ENCODE measurements at regions of chr18 and their contacts with region 1.

Region 1: DNA sequence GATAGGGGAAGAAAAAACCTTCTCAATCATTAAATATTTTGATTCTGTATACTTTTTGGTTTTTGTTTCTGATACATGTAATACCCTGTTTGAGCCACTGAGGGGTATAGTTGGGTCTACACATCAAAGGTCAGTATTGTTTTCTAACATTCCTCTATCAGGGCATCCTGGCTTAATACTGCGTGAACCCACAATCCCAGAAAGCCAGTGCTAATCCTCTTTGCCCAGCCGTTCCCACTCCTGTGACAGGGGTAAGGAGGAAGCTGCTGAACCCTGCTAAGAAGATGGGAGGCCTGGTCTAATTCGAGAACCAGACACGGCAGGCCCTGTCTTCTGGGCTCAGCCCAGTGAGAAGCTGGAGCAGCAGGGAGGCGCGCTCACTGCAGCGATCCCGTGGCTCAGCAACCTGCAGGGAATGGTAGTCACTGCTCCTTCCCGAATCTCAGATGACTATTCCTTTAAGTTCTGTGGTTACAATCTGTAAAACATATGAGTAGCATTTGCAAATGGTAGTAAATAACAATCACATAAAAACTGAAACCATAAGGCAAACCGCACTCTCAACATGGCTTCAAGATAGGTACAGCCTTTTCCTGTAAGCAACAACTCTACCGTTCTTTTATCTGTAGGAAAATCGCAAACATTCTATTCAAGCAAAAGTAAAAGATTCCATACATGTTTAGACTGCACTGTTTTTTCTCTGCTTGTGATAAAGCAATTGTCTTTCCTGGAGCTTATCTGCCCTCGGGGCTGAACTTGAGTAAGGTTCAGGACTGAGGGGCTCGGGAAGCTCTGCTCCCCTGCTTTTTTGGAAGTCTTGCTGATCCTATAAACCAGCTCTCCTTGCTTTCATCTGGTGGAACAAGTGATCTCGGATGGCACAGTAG is 87.0 kb downstream of the EPB41L3 start:
- H3K4me3 ChIP-seq: no peak overlapping the region
- H3K27ac ChIP-seq: no peak overlapping the region
- H3K4me1 ChIP-seq: peaks cover 19% of the 10 kb centered on the region
- CTCF ChIP-seq: peak; percentile 60

Region 2: GRCh38 chr18:5546660-5547059 is 89.8 kb after region 1 on chr18:
- CTCF ChIA-PET with region 1: interaction called, 28 read pairs
- POLR2A ChIA-PET with region 1: no interaction called
- H3K4me3 ChIP-seq: no peak overlapping the region
- H3K27ac ChIP-seq: no peak overlapping the region
- H3K4me1 ChIP-seq: peaks cover 9% of the 10 kb centered on the region
- CTCF ChIP-seq: no peak; the same call in 1 of the 2 replicates

Measured in HEK293 (cell line).